Activated T-helper 1 cell treated with anti-CD3 and anti-CD28 coated beads, Interleukin-12 subunit alpha, Interleukin-12 subunit beta, Interleukin-2, Interleukin-4 antibody, amounts not matched to agents 30 ng/mL and 10 ng/mL and 1 ng/mL, durations not matched to agents 14 hours and 24 hours and 36 hours (primary cell): ENCODE measurements at regions of chr22 and their contacts with region 1.

Region 1: GRCh38 chr22:39490135-39490798 is 11.8 kb upstream of the MIEF1 start:
- DNase-seq: peak; percentile 70
- H3K4me3 Mint-ChIP-seq: no peak overlapping the region
- H3K27ac Mint-ChIP-seq: peak overlapping the region; percentile 76
- H3K4me1 Mint-ChIP-seq: peaks cover 25% of the 10 kb centered on the region
- H3K27me3 Mint-ChIP-seq: peaks cover 2% of the 10 kb centered on the region

Region 2: DNA sequence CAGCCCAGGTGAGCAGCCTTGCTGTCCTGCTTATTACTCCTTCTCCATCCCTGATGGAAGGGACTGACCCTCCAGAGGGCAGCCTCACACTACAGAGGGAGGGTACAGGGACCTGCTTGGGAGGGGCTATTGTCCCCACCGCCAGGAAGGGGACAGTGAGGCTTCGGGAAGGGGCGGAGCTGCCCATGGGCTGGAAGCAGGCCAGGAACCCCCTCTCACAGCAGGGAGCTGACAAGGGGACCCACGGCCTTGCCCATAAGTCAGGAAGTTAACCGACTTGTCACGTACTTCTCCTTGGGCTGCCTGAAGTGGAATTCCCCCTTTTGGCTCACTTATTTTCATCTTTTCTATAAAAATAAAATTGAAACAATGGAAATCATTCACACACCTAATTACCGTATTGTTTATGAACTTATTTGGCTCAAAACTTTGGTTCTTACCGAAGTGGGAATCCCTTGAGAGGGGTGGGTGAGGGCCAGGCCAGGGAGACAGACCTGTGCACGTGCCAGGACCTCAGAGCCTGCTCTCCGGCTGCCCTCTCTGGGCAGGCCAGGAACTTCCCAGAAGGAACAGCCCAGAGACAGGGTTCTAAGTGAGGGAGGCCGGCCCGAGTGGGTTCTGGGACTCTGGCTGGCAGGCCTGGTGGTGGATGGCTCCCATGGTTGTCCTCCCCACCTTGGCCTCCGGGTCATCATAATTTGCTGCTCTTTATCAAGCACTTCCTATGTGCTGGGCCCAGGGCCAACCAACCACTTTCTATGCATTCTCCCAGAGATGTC is 27.6 kb before region 1 on chr22:
- intact Hi-C with region 1: no loop called
- DNase-seq: no peak
- H3K4me3 Mint-ChIP-seq: no peak overlapping the region
- H3K27ac Mint-ChIP-seq: peak overlapping the region; percentile 23
- H3K4me1 Mint-ChIP-seq: peaks cover 9% of the 10 kb centered on the region
- H3K27me3 Mint-ChIP-seq: peaks cover 24% of the 10 kb centered on the region

Region 3: DNA sequence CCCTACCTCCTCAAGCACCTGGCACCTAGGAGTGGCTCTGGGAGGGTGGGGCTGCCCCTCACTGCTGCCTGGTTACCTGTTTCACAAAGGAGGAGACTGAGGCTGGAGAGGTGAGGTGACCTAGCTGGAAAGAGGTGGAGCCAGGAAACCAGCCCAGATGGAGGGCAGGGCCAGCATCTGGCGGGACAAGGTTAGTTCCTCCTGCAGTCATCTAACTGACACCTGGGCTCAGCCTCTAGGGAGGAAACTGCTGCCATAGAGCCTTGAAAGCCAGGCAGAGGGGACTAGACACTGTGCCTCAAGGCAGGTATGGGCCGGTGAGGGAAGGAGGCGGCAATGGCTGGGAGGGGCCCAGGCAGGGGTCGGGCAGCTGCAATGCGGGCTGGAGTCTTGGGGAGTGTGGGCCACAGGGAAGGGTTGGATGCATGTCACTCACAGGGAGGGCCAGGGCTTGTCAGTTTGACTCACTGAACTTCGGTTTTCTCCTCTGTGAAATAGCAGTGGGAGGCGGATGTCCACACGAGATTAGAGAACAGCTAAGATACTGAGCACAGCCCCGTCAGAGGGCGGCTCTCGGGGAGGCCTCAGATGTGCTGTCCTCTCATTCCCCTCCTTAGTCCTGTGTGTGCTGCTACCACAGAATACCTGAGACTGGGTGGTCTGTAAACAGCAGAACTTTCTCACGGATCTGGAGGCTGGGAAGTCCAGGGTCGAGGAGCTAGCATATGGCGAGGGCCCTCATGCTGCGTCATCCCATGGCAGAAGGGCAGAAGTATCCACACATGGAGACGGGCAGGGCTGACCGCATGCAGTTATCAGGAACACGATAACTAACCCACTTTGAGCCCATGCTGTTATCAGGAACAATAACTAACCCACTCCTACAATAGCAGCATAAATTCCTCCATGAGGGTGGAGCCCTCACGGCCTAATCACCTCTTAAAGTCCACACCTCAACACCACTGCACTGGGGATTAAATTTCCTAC is 17.4 kb before region 1 on chr22:
- intact Hi-C with region 1: no loop called
- DNase-seq: no peak
- H3K4me3 Mint-ChIP-seq: no peak overlapping the region
- H3K27ac Mint-ChIP-seq: peak overlapping the region; percentile 16
- H3K4me1 Mint-ChIP-seq: peaks cover 19% of the 10 kb centered on the region
- H3K27me3 Mint-ChIP-seq: no peaks in the 10 kb centered on the region

Region 4: DNA sequence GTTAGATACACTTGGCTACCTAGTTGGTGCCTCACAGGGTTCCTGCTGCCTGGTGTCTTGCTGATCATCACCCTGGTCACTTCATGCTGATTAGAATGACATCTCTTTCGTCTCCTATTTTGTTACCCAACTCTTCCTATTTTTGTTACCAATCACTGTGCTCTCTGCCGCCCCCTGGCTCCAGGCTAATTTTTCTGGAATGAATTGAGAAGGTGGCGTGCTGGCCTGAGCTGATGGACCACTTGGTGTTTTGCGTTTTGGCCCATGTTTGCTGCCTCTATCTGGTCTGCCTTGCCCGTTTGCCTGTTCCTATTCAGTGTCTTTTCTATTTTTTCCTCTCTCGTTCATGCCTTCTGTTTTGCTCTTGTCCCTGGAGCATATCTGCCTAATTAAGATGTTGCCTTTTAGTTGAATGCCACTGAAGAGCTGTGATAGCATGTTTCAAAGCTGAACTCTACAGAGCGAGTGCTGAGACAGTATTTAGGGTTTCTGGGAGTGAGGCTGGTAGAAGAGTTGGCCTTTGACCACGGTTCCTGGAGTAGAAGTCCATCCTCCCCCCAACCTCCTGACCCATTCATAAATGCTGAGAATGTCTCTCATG is 24.2 kb after region 1 on chr22:
- intact Hi-C with region 1: loop called (anchors 1 kb)
- DNase-seq: no peak
- H3K4me3 Mint-ChIP-seq: no peak overlapping the region
- H3K27ac Mint-ChIP-seq: no peak overlapping the region
- H3K4me1 Mint-ChIP-seq: peaks cover 33% of the 10 kb centered on the region
- H3K27me3 Mint-ChIP-seq: no peaks in the 10 kb centered on the region

Region 5: DNA sequence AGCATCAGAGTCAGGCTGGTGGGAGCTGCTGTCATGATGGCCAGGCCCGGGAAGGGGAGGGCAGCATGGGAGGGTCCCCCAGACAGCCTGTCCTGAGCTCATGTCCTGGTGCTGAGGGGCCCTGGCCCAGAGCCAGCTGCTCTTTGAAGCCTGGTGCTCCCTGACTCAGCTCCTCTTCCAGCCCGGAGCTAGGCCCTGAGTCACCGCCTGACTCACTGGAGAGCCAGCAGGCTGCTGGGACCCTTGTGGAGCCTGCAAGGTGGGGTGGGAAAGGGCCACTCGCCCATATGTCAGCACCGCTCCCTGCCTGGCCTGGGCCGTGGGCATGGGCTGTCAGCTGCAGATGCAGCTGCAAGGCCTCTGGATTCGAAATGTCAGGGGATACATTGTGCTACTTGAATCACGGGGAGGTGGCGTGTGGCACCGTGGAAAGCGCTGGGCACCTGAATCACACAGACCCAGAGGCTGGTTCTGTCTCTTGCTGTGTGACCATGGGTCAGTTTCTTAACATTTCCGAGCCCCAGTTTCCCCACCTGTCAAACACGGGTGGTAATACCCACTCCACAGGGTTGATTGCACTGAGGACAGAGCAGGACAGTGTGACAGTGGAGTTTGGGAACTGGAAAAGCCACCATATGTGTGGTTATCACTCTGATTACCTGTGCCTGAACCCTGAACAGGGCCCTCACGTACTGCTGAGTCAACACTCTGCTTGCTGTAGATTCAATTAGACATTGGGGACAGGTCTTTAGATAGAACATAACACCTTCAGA is 84.7 kb after region 1 on chr22:
- intact Hi-C with region 1: no loop called
- DNase-seq: no peak
- H3K4me3 Mint-ChIP-seq: no peak overlapping the region
- H3K27ac Mint-ChIP-seq: no peak overlapping the region
- H3K4me1 Mint-ChIP-seq: no peaks in the 10 kb centered on the region
- H3K27me3 Mint-ChIP-seq: peaks cover 20% of the 10 kb centered on the region